Transverse colon (tissue), 4 donors: ENCODE measurements at regions of chr1 and their contacts with region 1.

Region 1: GRCh38 chr1:42017259-42017658 is 98.5 kb upstream of the HIVEP3 start:
- DNase-seq: no peak
- H3K4me3 ChIP-seq: no peak overlapping the region
- H3K27ac ChIP-seq: no peak overlapping the region
- H3K4me1 ChIP-seq: peaks cover 0 to 13% (median 5%) of the 10 kb centered on the region in 4 donors
- H3K27me3 ChIP-seq: no peaks in the 10 kb centered on the region
- CTCF ChIP-seq: no peak
- EP300 ChIP-seq: no peak
- POLR2A ChIP-seq: no peak

Region 2: DNA sequence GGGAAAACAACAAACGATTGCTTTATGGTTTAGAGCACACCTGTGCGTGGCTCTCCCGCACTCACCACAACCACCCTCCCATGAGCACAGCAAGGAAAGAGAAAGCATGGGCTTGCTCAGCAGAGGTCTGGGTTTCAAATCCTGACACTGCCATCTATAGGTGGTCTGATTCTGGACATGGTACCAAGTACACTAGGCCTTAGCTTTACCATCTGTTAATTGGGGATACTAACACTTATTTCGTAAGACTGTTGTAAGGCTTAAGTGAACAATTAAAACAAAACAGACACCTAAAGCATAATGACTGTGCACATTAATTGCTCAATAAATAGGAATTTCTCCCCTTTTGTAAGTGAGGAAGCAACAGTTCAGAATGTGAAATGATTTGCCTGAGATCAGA is 148.7 kb before region 1 on chr1:
- in situ Hi-C with region 1: no loop called
- intact Hi-C with region 1: no loop called
- DNase-seq: no peak
- H3K4me3 ChIP-seq: no peak overlapping the region
- H3K27ac ChIP-seq: no peak overlapping the region
- H3K4me1 ChIP-seq: no peaks in the 10 kb centered on the region
- H3K27me3 ChIP-seq: no peaks in the 10 kb centered on the region
- CTCF ChIP-seq: no peak
- EP300 ChIP-seq: no peak
- POLR2A ChIP-seq: no peak

Region 3: GRCh38 chr1:42052072-42052699 is 34.9 kb after region 1 on chr1:
- in situ Hi-C with region 1: no loop called
- intact Hi-C with region 1: no loop called
- DNase-seq: no peak
- H3K4me3 ChIP-seq: no peak overlapping the region
- H3K27ac ChIP-seq: no peak overlapping the region
- H3K4me1 ChIP-seq: no peaks in the 10 kb centered on the region
- H3K27me3 ChIP-seq: no peaks in the 10 kb centered on the region
- CTCF ChIP-seq: no peak
- EP300 ChIP-seq: no peak
- POLR2A ChIP-seq: no peak

Region 4: DNA sequence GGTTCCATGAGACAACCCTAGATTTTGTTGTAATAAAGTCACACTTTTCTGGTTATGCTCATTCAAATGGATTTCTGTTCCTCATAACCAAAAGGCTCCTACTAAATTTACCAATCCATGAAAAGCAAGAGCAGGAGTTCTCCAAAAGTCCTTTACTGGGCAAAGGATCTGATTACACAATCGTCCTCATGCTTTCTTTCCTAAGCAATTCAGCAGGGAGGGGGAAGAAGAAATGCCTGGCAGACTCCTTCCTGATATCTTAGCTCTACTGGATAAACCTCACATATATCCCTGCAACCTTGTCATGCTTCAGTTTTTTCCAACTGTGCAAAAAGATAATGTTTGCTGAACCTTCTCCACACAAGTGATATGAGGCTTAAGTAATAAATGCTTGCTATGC is 68.3 kb after region 1 on chr1:
- in situ Hi-C with region 1: no loop called
- intact Hi-C with region 1: loop called (anchors 2 kb)
- DNase-seq: no peak
- H3K4me3 ChIP-seq: no peak overlapping the region
- H3K27ac ChIP-seq: no peak overlapping the region
- H3K4me1 ChIP-seq: peaks cover 0 to 5% (median 2%) of the 10 kb centered on the region in 4 donors
- H3K27me3 ChIP-seq: peaks cover 7% of the 10 kb centered on the region
- CTCF ChIP-seq: no peak
- EP300 ChIP-seq: no peak
- POLR2A ChIP-seq: no peak